ENCODE measurements at regions of chr7 and their contacts with region 1.

Region 1: GRCh38 chr7:120402079-120402767 is 129.2 kb downstream of the KCND2 start:
- DNase-seq: peak; percentile 71
- ATAC-seq: peak; percentile 74
- H3K4me3 ChIP-seq: peak overlapping the region; percentile 56
- H3K27ac ChIP-seq: peak overlapping the region; percentile 84
- H3K4me1 ChIP-seq: peaks cover 47% of the 10 kb centered on the region
- H3K27me3 ChIP-seq: no peaks in the 10 kb centered on the region
- CTCF ChIP-seq: no peak

Region 2: DNA sequence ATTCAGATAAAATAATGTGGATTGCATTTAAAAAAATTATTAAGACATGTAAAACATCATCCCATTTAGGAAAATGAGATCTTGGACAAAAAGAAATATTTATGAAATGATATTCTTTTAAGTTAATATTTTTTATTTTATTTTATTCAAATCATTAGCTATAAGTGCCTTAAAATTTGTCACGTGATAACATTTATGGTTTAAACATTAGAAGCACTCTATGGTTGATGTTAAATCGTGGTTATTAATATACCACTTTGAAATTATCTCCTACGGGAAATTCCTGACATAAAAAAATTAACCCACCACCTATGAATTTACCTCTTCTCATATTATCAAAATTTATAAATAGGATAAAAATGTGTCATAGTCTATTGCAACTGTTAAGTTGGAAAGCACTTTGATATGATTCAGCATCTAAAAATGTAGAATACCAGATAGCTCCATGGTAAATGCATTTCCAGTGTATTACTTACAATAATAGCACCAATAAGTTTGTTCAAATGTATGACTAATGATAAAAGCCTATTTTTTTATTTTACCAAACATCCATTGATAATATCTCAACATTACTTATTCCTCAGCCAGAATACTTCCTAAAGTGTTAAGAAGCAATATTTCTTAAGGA is 143.0 kb before region 1 on chr7:
- CTCF ChIA-PET with region 1: no interaction called
- POLR2A ChIA-PET with region 1: no interaction called
- intact Hi-C with region 1: no loop called
- DNase-seq: peak; percentile 53
- ATAC-seq: peak; percentile 86
- H3K4me3 ChIP-seq: no peak overlapping the region
- H3K27ac ChIP-seq: peak overlapping the region; percentile 49
- H3K4me1 ChIP-seq: peaks cover 5% of the 10 kb centered on the region; the same call in 1 of the 2 replicates
- H3K27me3 ChIP-seq: no peaks in the 10 kb centered on the region
- CTCF ChIP-seq: no peak

Region 3: GRCh38 chr7:120272261-120272660 is 130.0 kb before region 1 on chr7:
- CTCF ChIA-PET with region 1: no interaction called
- POLR2A ChIA-PET with region 1: no interaction called
- intact Hi-C with region 1: loop called (anchors 5 kb)
- DNase-seq: peak; percentile 66
- ATAC-seq: peak; percentile 67
- H3K4me3 ChIP-seq: peak overlapping the region; percentile 72
- H3K27ac ChIP-seq: no peak overlapping the region
- H3K4me1 ChIP-seq: no peaks in the 10 kb centered on the region
- H3K27me3 ChIP-seq: peaks cover 7% of the 10 kb centered on the region
- CTCF ChIP-seq: peak; percentile 86

Region 4: DNA sequence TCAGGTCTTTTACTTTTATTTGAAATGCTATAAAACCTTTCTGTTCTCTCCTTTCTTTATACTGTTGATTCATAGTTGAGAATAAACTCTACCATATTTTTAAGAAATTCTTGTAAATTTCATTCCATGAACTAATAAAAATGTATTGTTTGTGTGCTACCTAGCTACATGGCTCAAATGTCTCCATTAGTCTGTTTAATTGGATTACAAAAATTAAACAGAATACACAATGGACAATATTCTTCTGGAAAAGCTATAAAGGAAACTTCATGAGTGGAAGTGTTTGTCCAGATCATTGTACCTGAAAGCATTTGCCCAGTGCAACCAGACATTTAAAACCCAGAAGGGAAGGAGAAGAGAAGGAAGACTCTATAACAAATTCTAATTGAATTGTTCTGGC is 109.2 kb before region 1 on chr7:
- CTCF ChIA-PET with region 1: no interaction called
- POLR2A ChIA-PET with region 1: no interaction called
- intact Hi-C with region 1: loop called (anchors 1 kb)
- DNase-seq: no peak
- ATAC-seq: peak; percentile 85
- H3K4me3 ChIP-seq: no peak overlapping the region
- H3K27ac ChIP-seq: no peak overlapping the region
- H3K4me1 ChIP-seq: no peaks in the 10 kb centered on the region
- H3K27me3 ChIP-seq: no peaks in the 10 kb centered on the region
- CTCF ChIP-seq: no peak

Region 5: GRCh38 chr7:120502132-120502531 is 99.9 kb after region 1 on chr7:
- CTCF ChIA-PET with region 1: no interaction called
- POLR2A ChIA-PET with region 1: no interaction called
- intact Hi-C with region 1: loop called (anchors 5 kb)
- DNase-seq: no peak
- ATAC-seq: peak; percentile 11; the same call in 1 of the 2 replicates
- H3K4me3 ChIP-seq: no peak overlapping the region
- H3K27ac ChIP-seq: no peak overlapping the region
- H3K4me1 ChIP-seq: no peaks in the 10 kb centered on the region
- H3K27me3 ChIP-seq: no peaks in the 10 kb centered on the region
- CTCF ChIP-seq: no peak

Region 6: DNA sequence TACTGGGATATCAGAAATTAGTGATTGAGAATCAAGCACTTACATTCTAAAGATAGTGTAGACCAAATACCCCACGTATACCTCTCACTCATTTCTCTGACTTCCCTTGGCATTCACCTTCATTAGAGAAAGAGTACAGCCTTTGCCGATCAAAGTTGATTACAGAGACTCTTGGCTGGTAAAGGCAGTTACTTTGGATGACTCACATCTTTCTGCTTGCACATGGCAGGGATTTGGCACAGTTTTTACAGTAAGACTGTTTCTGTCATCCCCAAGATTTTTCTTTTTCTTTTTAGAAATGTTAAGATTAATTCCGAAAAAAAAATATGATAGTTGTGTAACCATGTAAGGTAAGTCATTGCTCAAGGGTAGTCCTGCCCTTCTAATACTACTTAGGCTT is 312.7 kb after region 1 on chr7:
- CTCF ChIA-PET with region 1: no interaction called
- POLR2A ChIA-PET with region 1: no interaction called
- intact Hi-C with region 1: loop called (anchors 10 kb)
- DNase-seq: peak; percentile 50
- ATAC-seq: peak; percentile 83
- H3K4me3 ChIP-seq: no peak overlapping the region
- H3K27ac ChIP-seq: no peak overlapping the region
- H3K4me1 ChIP-seq: peaks cover 3% of the 10 kb centered on the region; the same call in 1 of the 2 replicates
- H3K27me3 ChIP-seq: no peaks in the 10 kb centered on the region
- CTCF ChIP-seq: no peak

Region 7: DNA sequence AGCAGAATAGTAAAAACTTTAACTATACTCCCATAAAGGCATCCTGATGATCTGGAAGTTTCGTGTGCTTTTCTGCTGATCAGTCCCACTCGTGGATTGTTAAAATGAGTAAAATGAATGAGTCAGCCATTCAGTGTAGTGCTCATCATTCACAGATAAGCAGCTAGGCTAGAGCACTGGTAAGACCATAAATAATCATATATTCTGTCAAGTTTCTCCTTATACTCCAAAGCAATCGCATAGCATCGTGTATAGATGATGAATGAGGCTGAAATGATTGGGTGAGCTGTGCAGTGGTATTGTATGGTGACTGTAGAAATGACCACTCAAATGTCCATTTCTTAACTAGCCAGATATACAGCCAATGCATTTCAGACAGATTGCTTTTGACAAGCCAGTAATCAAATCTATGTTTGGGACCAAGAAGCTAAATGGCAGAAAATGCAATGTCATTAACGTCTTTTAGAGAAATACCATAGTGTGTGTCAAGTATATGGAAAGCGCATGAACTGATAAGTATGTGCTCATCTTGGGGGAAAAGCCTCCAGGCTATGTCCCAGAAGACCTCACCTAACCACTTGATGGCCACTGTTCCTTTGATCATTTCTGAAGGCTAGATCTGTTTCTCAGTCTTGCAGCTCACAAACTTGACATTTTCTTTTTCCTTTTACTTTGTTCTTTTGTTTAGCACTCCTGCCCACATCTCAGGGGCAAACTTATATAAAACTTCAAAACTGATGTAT is 1221.1 kb after region 1 on chr7:
- CTCF ChIA-PET with region 1: no interaction called
- POLR2A ChIA-PET with region 1: interaction called, 17 read pairs
- intact Hi-C with region 1: no loop called
- DNase-seq: no peak
- ATAC-seq: no peak
- H3K4me3 ChIP-seq: no peak overlapping the region
- H3K27ac ChIP-seq: no peak overlapping the region
- H3K4me1 ChIP-seq: no peaks in the 10 kb centered on the region
- H3K27me3 ChIP-seq: peaks cover 11% of the 10 kb centered on the region
- CTCF ChIP-seq: no peak

Measured in PC-3 (cell line).